Spleen (tissue), 13 donors: ENCODE measurements at regions of chr1 and their contacts with region 1.

Region 1: GRCh38 chr1:39981957-39982356 is 27.0 kb downstream of the MFSD2A start:
- DNase-seq: no peak
- H3K4me3 ChIP-seq: no peak overlapping the region
- H3K27ac ChIP-seq: no peak overlapping the region
- H3K4me1 ChIP-seq: peaks cover 0 to 12% (median 0%) of the 10 kb centered on the region in 6 donors
- H3K27me3 ChIP-seq: no peaks in the 10 kb centered on the region
- CTCF ChIP-seq: no peak
- POLR2A ChIP-seq: no peak

Region 2: GRCh38 chr1:39434797-39435395 is 547.1 kb before region 1 on chr1:
- intact Hi-C with region 1: no loop called
- DNase-seq: no peak
- H3K4me3 ChIP-seq: no peak overlapping the region
- H3K27ac ChIP-seq: peak overlapping the region in 1 of 8 donors; percentile 0
- H3K4me1 ChIP-seq: no peaks in the 10 kb centered on the region
- H3K27me3 ChIP-seq: no peaks in the 10 kb centered on the region
- CTCF ChIP-seq: no peak
- POLR2A ChIP-seq: no peak

Region 3: GRCh38 chr1:39898648-39899603 is 83.0 kb before region 1 on chr1:
- intact Hi-C with region 1: no loop called
- DNase-seq: no peak
- H3K4me3 ChIP-seq: no peak overlapping the region
- H3K27ac ChIP-seq: no peak overlapping the region
- H3K4me1 ChIP-seq: peaks cover 5 to 27% (median 21%) of the 10 kb centered on the region in 6 donors
- H3K27me3 ChIP-seq: peaks cover 4 to 91% (median 42%) of the 10 kb centered on the region in 7 donors
- CTCF ChIP-seq: no peak
- POLR2A ChIP-seq: no peak

Region 4: GRCh38 chr1:40039757-40040510 is 58.0 kb after region 1 on chr1:
- intact Hi-C with region 1: loop called (anchors 10 kb)
- DNase-seq: peak; percentile 97
- H3K4me3 ChIP-seq: peak overlapping the region; percentile 65 to 99 (median 96)
- H3K27ac ChIP-seq: peak overlapping the region; percentile 96 to 100 (median 98)
- H3K4me1 ChIP-seq: peaks cover 46 to 89% (median 82%) of the 10 kb centered on the region in 6 donors
- H3K27me3 ChIP-seq: no peaks in the 10 kb centered on the region
- CTCF ChIP-seq: no peak
- POLR2A ChIP-seq: peak; percentile 63 to 91 (median 87)